Heart left ventricle (tissue), 16 donors: ENCODE measurements at regions of chr15 and their contacts with region 1.

Region 1: GRCh38 chr15:82530606-82531379 is 9.5 kb downstream of the RPS17 start:
- DNase-seq: peak; percentile 52 to 75 (median 64)
- ATAC-seq: peak; percentile 77 to 90 (median 85)
- H3K4me3 ChIP-seq: peak overlapping the region in 6 of 12 donors; percentile 12 to 43 (median 24)
- H3K27ac ChIP-seq: no peak overlapping the region
- H3K4me1 ChIP-seq: peaks cover 0 to 12% (median 4%) of the 10 kb centered on the region in 12 donors
- H3K27me3 ChIP-seq: no peaks in the 10 kb centered on the region
- CTCF ChIP-seq: peak; percentile 72 to 90 (median 80)
- POLR2A ChIP-seq: no peak

Region 2: DNA sequence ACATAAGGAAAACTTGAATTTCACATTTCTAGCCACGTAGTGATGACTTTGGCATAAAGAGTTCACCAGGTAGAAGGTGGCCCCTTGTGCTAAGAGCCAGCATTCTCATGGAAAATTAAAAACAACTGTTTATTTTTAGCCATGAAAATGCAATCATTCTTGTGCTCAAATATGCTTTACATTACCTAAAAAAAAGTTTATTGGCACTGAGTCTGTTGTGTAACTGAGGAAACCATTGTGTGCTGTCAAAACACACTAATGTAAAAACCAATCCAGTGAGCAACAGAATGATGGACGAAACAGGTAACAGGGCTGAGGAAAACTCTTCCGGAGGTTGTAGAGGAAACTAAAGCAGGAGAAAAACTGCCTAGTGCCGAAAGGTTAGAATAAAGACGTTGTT is 869.8 kb before region 1 on chr15:
- intact Hi-C with region 1: no loop called
- DNase-seq: no peak
- ATAC-seq: no peak
- H3K4me3 ChIP-seq: no peak overlapping the region
- H3K27ac ChIP-seq: no peak overlapping the region
- H3K4me1 ChIP-seq: no peaks in the 10 kb centered on the region
- H3K27me3 ChIP-seq: no peaks in the 10 kb centered on the region
- CTCF ChIP-seq: no peak
- POLR2A ChIP-seq: no peak

Region 3: DNA sequence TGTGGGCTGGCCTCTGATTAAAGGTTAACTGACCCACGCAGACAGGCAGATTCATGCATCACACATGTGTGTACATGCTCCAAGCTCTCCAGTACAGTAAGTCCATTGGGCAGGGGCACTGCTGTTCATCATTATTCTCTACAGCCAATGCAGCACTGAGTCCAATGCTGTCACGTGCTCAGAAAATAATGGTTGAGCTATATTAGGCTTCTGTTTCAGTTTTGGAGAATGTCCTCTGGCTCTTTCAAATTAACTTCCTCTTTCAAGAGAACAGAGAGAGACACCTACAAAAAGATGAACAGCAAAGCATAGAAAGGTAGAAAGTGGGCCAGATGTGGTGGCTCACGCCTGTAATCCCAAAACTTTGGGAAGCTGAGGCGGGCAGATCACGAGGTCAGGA is 687.6 kb before region 1 on chr15:
- intact Hi-C with region 1: no loop called
- DNase-seq: no peak
- ATAC-seq: no peak
- H3K4me3 ChIP-seq: no peak overlapping the region
- H3K27ac ChIP-seq: no peak overlapping the region
- H3K4me1 ChIP-seq: no peaks in the 10 kb centered on the region
- H3K27me3 ChIP-seq: no peaks in the 10 kb centered on the region
- CTCF ChIP-seq: no peak
- POLR2A ChIP-seq: no peak

Region 4: DNA sequence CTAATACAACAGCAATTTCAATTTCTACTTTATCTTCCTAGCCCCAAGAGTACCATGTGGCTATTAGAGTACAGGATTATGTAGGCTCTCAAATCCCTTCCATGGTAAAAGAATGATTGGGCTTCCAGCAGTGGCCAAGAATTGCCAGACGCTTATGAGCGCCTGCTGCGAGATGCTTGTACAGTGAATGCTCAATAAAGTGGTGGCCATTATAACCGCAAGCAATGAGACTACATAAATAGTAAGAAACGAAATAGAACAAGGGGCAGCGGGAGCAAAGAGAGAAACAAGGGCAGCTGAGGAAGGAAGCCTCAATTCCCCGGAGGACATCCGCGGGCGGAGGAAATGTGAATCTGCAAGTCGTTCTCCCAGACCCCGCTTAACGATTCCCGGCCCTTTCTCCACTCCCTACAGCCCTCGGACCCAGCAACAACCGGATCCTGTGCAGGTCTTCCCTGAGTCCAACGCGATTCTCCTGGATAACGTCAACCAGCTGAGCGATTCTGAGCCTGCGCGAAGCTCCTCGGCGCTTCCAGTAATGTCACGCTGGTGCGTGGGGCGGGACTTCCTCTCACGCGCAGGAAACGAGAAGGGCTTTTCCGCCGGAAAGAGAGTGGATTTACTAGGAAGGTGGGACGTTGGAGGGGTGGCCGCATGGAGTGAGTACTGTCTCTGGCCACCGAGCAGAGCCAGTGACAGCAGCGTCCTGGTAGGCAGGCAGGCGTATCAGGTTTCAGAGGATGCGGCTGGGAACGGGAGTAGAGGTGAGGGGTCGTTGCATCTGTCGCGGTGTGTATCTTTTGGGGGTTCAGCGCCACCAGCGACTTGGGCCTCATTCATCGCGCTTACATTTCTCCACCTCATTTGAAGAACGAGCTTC is 219.4 kb after region 1 on chr15:
- intact Hi-C with region 1: loop called in 1 of 10 experiments (anchors 10 kb)
- DNase-seq: peak; percentile 91 to 95 (median 93)
- ATAC-seq: peak; percentile 97 to 99 (median 99)
- H3K4me3 ChIP-seq: peak overlapping the region; percentile 25 to 95 (median 77)
- H3K27ac ChIP-seq: peak overlapping the region; percentile 27 to 95 (median 90)
- H3K4me1 ChIP-seq: peaks cover 0 to 36% (median 17%) of the 10 kb centered on the region in 12 donors
- H3K27me3 ChIP-seq: no peaks in the 10 kb centered on the region
- CTCF ChIP-seq: no peak
- POLR2A ChIP-seq: peak in 1 of 2 donors; percentile 82

Region 5: GRCh38 chr15:82809404-82810060 is 278.7 kb after region 1 on chr15 and contains the start of gene WHAMM:
- intact Hi-C with region 1: loop called in 1 of 10 experiments (anchors 10 kb)
- DNase-seq: peak; percentile 98 to 99 (median 99)
- ATAC-seq: peak; percentile 93 to 97 (median 95)
- H3K4me3 ChIP-seq: peak within 1 kb of the TSS; percentile 71 to 99 (median 89)
- H3K27ac ChIP-seq: peak within 1 kb of the TSS; percentile 96 to 100 (median 99)
- H3K4me1 ChIP-seq: peaks cover 0 to 51% (median 33%) of the 10 kb centered on the region in 12 donors
- H3K27me3 ChIP-seq: no peaks in the 10 kb centered on the region
- CTCF ChIP-seq: peak in 3 of 12 donors; percentile 8 to 35 (median 23)
- POLR2A ChIP-seq: peak; percentile 90 to 96
- total RNA-seq, gene WHAMM: 4.6 to 9.1 (median 6.3) TPM

Region 6: DNA sequence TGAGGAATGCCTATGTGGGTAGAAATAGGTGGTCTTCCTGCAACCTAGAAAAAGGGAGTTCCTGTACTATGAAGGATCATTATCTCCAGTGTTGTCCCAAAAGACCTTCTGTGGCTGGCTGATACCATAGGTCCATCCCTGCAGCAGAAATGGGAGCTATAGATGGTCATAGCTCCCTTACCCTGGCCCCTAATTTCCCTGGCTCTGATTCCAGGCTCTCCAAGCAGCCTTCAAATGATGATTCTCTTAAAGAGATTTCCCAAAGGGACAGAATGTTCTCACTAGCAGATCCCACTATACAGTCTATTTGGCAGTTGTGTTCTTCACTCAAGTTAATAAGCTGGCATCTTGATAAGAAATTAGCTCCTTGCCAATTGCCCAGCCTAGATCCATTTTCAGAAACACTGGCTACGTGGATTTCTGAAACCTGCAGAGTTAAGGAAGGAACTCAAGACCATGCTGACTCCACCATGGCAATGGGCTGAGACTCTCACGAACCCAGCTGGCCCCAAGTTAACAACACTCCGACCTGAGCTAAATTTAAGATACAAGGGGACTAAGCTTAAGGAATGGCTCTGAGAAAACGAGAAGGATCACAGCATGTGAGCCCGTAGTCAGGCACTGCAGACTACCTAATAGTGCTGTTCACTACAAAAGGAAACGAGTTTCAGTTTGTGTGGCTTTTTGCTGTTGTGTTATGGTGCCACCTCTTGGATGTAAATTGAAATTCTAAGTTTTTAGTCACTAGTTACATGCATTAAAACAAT is 469.3 kb after region 1 on chr15:
- intact Hi-C with region 1: loop called in 4 of 10 experiments (anchors 10 kb)
- DNase-seq: no peak
- ATAC-seq: peak; percentile 37 to 86 (median 80)
- H3K4me3 ChIP-seq: peak overlapping the region in 7 of 12 donors; percentile 18 to 44 (median 35)
- H3K27ac ChIP-seq: peak overlapping the region in 1 of 12 donors; percentile 27
- H3K4me1 ChIP-seq: peaks cover 0 to 11% (median 4%) of the 10 kb centered on the region in 12 donors
- H3K27me3 ChIP-seq: no peaks in the 10 kb centered on the region
- CTCF ChIP-seq: peak; percentile 22 to 67 (median 46)
- POLR2A ChIP-seq: no peak

Region 7: DNA sequence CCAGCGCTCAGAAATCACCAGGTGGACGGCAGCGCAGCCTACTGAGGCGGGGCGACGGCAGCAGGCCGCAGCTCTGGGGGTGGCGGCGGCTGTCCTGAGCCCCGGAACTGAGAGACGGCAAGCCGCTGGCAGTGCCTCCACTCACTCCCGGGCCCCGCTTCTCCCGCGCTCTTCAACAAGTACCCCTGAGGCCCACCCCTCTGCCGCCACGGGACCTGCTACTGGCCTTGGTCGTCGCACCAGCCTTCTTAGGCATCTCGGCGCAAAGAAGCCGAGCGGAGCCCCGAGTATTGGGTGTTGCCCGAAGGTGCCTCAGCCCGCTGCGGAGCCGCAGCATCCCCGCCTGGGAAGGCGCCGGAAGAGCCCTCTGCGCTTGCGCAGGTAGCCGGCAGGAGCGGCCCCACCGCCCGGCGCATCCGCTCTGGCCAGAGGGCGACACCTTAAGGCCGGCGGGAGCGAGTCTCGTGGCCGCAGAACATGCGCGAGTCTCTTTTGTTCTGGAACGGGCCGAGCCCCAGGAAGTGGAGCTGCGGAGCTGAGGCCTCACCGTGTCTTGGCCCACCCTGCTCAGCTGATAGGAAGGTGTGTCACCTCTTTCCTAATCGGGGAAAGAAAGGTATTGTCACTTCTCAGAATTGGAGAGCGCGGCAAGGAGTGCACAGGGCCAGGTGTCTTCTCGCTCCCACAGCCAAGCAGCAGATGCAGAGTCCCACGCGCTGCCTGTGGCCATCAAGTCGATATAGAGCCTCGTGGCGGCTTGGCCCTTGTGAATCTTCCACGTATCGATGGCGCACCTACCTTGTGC is 480.7 kb after region 1 on chr15 and contains the start of gene C15orf40:
- intact Hi-C with region 1: loop called in 5 of 10 experiments (anchors 10 kb)
- DNase-seq: peak; percentile 91 to 95 (median 94)
- ATAC-seq: peak; percentile 96 to 99 (median 98)
- H3K4me3 ChIP-seq: peak within 1 kb of the TSS; percentile 67 to 100 (median 89)
- H3K27ac ChIP-seq: peak within 1 kb of the TSS; percentile 14 to 90 (median 82)
- H3K4me1 ChIP-seq: peaks cover 0 to 31% (median 21%) of the 10 kb centered on the region in 12 donors
- H3K27me3 ChIP-seq: no peaks in the 10 kb centered on the region
- CTCF ChIP-seq: peak; percentile 41 to 87 (median 70)
- POLR2A ChIP-seq: peak in 1 of 2 donors; percentile 71
- total RNA-seq, gene C15orf40: 6.0 to 17.0 (median 10.5) TPM